ENCODE measurements at regions of chr2 and their contacts with region 1.

Region 1: GRCh38 chr2:73156539-73157124 is 43.9 kb upstream of the RAB11FIP5 start:
- DNase-seq: peak in 1 of 2 experiments; percentile 34
- H3K4me3 ChIP-seq: no peak overlapping the region
- H3K4me3 Mint-ChIP-seq: no peak overlapping the region
- H3K27ac Mint-ChIP-seq: no peak overlapping the region
- H3K4me1 ChIP-seq: no peaks in the 10 kb centered on the region
- H3K4me1 Mint-ChIP-seq: no peaks in the 10 kb centered on the region
- H3K27me3 ChIP-seq: no peaks in the 10 kb centered on the region
- H3K27me3 Mint-ChIP-seq: peaks cover 19% of the 10 kb centered on the region
- CTCF ChIP-seq: peak; percentile 25 to 43

Region 2: DNA sequence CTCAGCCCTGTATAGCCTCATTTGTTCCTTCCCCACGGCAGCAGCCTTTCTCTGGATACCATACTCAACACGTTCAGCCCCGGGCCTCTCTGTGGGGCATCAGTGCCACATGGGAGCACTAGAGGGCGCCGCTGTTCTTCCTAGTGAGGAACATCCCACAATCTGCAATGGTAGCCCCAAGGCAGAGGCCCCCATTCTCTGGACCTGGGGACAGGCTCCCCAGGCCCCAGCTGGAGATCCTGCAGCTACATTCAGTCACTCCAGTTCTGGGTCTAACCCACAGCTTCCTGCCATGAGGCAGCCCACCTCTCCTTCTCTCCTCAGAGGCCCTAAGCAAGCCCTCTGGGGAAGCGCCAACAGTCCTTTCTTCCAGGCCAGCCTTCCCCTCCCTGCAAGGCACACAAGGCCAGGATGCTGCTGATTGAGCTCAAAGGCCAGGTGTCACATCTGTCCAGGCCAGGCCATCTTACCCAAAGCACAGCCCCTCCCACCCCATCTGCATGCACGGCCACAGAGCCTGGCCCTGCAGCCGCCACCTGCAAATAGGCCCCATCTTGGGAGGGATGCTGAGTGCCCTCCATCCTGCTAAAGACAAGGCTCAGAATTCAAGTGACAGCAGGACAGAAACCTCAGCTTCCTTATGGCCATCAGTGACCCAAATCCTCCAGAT is 70.8 kb before region 1 on chr2:
- CTCF ChIA-PET with region 1: interaction called, 12 read pairs
- POLR2A ChIA-PET with region 1: no interaction called
- intact Hi-C with region 1: no loop called
- DNase-seq: peak; percentile 87 to 89
- H3K4me3 ChIP-seq: no peak overlapping the region
- H3K4me3 Mint-ChIP-seq: no peak overlapping the region
- H3K27ac Mint-ChIP-seq: no peak overlapping the region
- H3K4me1 ChIP-seq: peaks cover 27% of the 10 kb centered on the region
- H3K4me1 Mint-ChIP-seq: peaks cover 24% of the 10 kb centered on the region
- H3K27me3 ChIP-seq: no peaks in the 10 kb centered on the region
- H3K27me3 Mint-ChIP-seq: no peaks in the 10 kb centered on the region
- CTCF ChIP-seq: peak; percentile 93 to 95

Region 3: DNA sequence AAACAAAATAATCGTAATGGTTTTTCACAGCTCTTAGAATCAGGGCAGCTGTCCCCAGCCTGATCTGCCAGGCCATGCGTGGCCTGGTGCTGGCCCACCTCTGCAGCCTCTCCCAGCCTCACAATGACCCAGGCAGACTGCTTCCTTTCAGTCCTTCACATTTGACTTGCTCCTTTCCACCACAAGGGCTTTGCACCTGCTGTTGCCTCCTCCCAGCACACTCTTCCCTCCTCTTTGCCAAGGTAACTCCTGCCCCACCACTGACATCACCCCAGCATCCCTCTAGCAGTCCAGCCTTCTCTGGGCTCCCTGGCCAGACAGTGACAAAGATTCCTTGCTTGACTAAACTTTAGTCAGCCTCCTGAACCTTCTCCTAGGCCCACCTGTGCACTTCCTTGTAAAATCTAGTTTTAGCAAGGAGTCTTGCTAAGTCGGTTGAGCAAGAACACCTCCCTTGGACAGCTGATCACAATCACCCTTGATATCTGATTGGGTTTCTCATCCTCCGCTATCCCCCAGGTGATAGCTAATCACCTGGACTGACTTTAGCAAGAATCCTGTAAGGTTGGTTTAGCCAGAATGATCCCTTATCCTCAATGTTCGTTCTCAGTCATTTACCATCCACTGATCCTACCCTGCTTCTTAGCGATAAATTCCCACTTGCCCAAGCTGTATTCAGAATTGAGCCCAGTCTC is 27.6 kb before region 1 on chr2:
- CTCF ChIA-PET with region 1: no interaction called
- POLR2A ChIA-PET with region 1: no interaction called
- intact Hi-C with region 1: no loop called
- DNase-seq: no peak
- H3K4me3 ChIP-seq: no peak overlapping the region
- H3K4me3 Mint-ChIP-seq: no peak overlapping the region
- H3K27ac Mint-ChIP-seq: no peak overlapping the region
- H3K4me1 ChIP-seq: no peaks in the 10 kb centered on the region
- H3K4me1 Mint-ChIP-seq: no peaks in the 10 kb centered on the region
- H3K27me3 ChIP-seq: no peaks in the 10 kb centered on the region
- H3K27me3 Mint-ChIP-seq: peaks cover 15% of the 10 kb centered on the region
- CTCF ChIP-seq: no peak

Region 4: DNA sequence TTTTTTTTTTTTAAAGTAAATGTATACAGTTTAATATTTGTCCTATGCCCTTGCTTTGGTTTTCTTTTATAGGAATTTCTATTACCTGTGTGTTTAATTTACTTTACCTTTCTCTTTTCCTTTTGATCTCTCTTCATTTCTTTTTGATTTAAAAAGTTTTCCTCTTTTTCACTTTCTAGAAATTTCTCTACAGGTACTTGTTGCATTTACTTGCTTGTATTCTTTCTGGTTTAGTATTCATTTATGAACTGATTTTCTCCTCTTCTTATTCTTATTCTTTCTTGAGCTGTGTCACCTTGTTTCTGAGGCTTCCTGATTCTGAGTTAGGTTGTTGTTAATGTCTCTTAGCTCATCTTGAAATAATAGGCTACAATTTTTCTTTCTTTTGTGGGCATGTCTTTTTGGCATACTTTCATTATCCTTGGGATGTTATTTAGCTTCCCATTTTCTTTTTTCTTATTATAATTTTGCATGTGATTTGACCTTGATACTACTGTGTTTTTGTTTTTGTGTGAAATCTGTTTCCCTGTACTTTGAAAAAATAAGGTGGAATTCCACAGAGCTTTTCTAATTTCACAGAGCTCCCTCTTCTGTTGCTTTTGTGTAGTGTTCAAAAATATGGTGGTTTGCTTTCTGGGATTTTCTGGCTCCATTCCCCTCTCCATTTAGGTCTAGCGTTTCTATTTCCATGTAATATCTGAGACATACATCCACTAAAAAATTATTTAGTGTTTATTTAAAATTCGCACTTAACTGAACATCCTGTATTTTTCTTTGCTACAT is 203.5 kb after region 1 on chr2:
- CTCF ChIA-PET with region 1: no interaction called
- POLR2A ChIA-PET with region 1: no interaction called
- intact Hi-C with region 1: no loop called
- DNase-seq: peak in 1 of 2 experiments; percentile 9
- H3K4me3 ChIP-seq: no peak overlapping the region
- H3K4me3 Mint-ChIP-seq: no peak overlapping the region
- H3K27ac Mint-ChIP-seq: no peak overlapping the region
- H3K4me1 ChIP-seq: no peaks in the 10 kb centered on the region
- H3K4me1 Mint-ChIP-seq: no peaks in the 10 kb centered on the region
- H3K27me3 ChIP-seq: no peaks in the 10 kb centered on the region; the same call in 1 of the 2 replicates
- H3K27me3 Mint-ChIP-seq: peaks cover 10% of the 10 kb centered on the region
- CTCF ChIP-seq: peak; percentile 32 to 53